Posterior cingulate gyrus (tissue), 11 donors: ENCODE measurements at regions of chr11 and their contacts with region 1.

Region 1: GRCh38 chr11:67391304-67392132 is at the start of gene RAD9A:
- DNase-seq: peak; percentile 91 to 99 (median 94)

Region 2: DNA sequence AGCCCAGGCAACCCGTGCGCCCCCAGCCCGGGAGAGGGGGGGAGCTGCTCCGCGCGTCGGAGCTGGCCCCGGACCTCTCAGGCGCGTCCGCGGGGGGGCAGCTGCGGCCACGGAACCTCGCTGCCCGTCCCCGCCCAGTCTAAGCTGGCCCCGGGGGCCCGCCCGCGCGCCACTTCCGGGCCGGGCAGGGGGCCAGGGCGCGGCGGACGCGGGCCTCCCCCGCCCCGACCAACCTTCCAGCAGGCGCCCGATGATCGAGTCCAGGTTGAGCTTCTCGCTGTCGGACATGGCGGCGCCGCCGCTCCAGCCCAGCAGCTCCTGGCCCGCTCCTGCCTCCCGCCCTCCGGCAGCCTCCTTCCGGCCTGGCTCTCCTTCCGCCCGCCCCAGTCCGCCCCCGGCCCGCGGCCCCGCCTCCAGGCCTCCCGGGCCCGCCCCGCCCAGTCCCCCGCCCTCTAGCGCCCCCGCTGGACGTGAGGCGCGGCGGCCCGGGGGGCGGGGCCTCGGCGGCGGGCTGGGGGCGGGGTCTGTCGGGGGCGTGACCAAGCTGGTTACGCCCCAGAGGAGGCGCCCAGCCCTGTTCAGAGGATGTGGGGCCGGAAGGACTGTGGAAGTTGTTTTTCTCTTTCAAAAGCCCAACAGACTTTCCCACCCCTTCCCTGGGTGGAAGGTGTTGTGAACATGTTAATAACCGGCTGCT is 10.1 kb after region 1 on chr11 and contains the start of gene PPP1CA:
- intact Hi-C with region 1: loop called (anchors 1 kb)
- DNase-seq: peak; percentile 82 to 99 (median 90)

Region 3: GRCh38 chr11:67428052-67428914 is 36.8 kb after region 1 on chr11 and contains the start of gene RPS6KB2:
- intact Hi-C with region 1: loop called (anchors 2 kb)
- DNase-seq: peak; percentile 98 to 100 (median 99)

Region 4: DNA sequence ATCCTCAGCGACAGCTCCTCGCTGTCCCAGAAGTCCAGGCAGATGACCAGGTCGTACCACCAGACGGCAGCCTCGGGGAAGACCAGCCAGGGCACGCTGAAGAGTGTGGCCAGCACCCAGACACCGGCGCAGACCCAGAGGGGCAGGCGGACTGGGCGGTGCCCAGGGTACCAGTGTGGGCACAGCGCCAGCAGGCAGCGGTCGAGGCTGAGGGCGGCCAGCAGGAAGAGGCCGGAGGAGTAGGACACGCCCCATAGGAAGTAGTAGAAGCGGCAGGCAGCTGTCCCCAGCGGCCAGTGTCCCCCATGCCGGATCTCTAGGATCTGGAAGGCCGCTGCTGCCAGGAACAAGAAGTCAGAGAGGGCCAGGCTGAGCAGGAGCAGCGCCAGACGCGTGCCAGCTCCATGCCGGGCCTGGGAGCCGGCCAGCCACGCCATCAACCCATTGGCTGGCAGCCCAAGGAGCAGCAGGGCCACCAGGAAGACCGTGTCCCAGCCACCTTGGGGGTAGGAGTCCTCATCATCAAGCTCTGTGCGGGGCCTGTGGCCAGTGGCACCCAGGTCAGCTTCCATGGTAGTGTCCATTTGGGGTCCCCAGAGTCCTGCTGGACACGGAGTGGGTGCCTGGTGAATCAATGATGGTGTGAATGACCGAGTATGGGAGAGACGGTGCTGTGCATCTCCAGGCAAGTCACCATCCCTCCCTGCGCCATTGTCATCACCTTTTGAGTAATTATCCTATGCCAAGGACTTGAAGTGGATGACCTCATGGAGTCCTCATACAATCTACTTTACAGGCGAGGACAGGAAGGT is 60.8 kb after region 1 on chr11 and contains the start of gene GPR152:
- intact Hi-C with region 1: no loop called
- DNase-seq: peak in 1 of 10 donors; percentile 89

Region 5: GRCh38 chr11:67545280-67545679 is 153.8 kb after region 1 on chr11:
- intact Hi-C with region 1: no loop called
- DNase-seq: peak in 1 of 10 donors; percentile 6